Activated CD4-positive, alpha-beta memory T cell treated with anti-CD3 and anti-CD28 coated beads for 36 hours (primary cell): ENCODE measurements at regions of chrX and their contacts with region 1.

Region 1: GRCh38 chrX:46836701-46837557 is at the start of gene RP2:
- DNase-seq: peak; percentile 90
- H3K4me3 Mint-ChIP-seq: peak within 1 kb of the TSS; percentile 97
- H3K27ac Mint-ChIP-seq: peak within 1 kb of the TSS; percentile 92
- H3K4me1 Mint-ChIP-seq: peaks cover 15% of the 10 kb centered on the region
- H3K27me3 Mint-ChIP-seq: no peaks in the 10 kb centered on the region
- total RNA-seq, gene RP2: 5.0 to 5.5 TPM

Region 2: GRCh38 chrX:46662594-46662993 is 174.3 kb before region 1 on chrX:
- CTCF ChIA-PET with region 1: no interaction called
- POLR2A ChIA-PET with region 1: no interaction called
- intact Hi-C with region 1: no loop called
- DNase-seq: no peak
- H3K4me3 Mint-ChIP-seq: no peak overlapping the region
- H3K27ac Mint-ChIP-seq: no peak overlapping the region
- H3K4me1 Mint-ChIP-seq: peaks cover 17% of the 10 kb centered on the region
- H3K27me3 Mint-ChIP-seq: no peaks in the 10 kb centered on the region

Region 3: DNA sequence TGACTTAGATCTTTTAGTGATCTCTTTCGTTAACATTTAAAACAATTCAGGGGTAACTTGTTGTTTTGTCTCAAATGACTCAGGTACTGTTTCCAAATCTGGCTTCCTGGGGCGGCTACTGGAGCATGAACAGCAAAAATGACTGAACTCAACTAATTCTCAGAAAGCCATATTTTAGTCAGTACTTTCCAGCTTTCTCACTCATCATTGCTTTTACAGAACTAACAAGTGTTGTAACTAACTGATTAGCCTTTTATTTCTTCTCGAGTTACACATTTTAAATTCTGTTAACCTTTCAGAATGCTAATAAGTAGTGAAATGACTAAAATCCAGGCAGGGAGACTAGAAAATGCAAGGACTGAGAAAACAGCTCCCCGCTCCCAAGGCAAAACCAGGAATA is 130.6 kb after region 1 on chrX:
- CTCF ChIA-PET with region 1: no interaction called
- POLR2A ChIA-PET with region 1: no interaction called
- intact Hi-C with region 1: loop called (anchors 5 kb)
- DNase-seq: peak; percentile 65
- H3K4me3 Mint-ChIP-seq: peak overlapping the region; percentile 23
- H3K27ac Mint-ChIP-seq: no peak overlapping the region
- H3K4me1 Mint-ChIP-seq: peaks cover 25% of the 10 kb centered on the region
- H3K27me3 Mint-ChIP-seq: peaks cover 14% of the 10 kb centered on the region